ENCODE measurements at regions of chr2 and their contacts with region 1.

Region 1: DNA sequence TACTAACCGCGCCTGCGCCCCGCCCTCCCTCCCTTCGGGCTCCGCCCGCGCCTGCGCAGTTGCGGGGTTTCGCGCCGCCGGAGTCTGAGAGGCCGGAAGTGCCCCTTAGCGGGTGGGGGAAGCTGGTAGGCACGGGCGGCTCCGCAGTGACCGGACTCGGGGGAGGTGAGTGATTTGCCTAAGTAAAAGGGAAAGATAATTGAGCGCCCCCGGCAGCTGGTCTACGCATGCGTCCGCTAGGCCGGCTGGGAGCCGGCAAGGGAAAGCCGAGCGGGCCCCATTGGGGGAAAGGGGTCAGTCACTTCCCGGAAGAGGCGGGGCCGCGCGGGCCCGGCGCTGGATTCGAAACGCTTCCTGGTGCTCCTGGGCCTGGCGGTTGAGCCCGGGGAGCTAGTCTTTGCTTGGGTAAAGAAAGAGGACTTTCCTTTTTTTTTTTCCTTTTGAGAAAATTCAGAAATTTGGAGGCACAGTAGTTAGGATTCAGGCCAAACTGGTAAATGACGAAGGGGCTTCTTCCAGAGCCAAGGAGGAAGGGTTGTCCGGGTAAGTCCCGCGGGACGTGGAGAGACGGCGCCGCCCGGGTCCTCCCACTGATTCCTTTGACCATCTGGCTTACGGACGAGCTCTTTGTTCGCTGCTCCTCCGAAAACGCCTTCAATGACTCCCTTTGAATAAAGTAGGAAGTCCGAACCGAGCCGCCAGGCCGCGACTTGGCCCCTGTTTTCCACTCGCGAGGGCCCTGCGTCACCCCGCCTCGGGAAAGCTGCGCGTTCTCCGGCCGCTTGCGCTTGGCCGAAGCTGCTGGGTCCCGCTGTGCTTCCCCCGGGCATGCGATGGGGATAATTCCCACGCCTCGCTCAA is at the starts of genes GEN1 and SMC6:
- DNase-seq: peak; percentile 91 to 96 (median 95)
- ATAC-seq: peak; percentile 97 to 98
- H3K4me3 ChIP-seq: peak within 1 kb of the TSS; percentile 51
- H3K27ac ChIP-seq: peak within 1 kb of the TSS; percentile 99
- H3K4me1 ChIP-seq: peaks cover 3% of the 10 kb centered on the region
- H3K27me3 ChIP-seq: no peaks in the 10 kb centered on the region
- total RNA-seq, gene GEN1: 3.5 to 5.5 (median 4.3) TPM
- total RNA-seq, gene SMC6: 11.9 to 14.6 (median 13.1) TPM

Region 2: DNA sequence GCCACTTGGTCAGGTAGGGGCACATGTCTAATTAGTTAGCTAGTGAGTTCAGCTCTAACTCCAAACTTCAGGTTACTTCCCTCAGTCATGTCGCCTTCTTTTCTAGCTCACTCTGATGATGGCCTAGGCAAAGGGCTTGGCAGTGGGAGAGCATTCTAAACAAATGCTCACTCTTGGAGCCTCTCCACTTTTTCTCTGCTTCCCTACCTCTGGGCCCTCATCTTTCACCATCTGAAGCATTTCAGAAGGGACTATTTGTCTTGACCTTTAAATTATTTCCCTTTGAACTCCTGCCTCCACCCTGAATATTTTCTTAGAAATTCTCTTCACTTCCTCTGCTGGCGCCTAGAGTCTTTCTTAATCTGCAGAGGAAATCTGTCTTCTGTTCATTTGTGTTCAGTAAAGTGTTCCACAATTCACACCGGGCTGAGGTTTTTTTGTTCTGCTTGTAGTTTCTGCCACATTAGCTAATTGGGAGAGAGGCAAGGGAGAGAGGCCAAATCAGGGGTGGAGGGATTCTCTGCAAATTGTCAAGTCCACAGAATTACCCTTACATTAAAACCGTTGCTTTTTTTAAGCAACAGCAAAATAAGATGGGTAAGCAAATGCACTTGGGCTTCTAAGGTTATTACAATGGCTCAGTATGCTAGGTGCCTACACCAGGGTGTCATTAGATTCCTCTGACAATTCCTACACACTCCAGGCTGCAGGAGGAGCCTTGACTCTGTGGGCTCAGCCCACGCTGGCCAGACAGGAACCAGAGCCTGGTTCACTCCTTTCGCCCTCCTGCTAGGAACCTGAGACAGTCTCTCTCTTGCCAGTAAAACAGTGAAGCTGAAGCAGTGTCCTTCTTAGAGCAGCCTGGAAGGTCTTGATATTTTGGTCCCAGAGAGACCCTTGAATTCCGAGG is 67.8 kb after region 1 on chr2:
- intact Hi-C with region 1: loop called in 2 of 4 experiments (anchors 10 kb)
- DNase-seq: peak in 1 of 3 donors; percentile 46
- ATAC-seq: peak; percentile 52 to 64
- H3K4me3 ChIP-seq: no peak overlapping the region
- H3K27ac ChIP-seq: peak overlapping the region; percentile 93
- H3K4me1 ChIP-seq: peaks cover 3% of the 10 kb centered on the region
- H3K27me3 ChIP-seq: no peaks in the 10 kb centered on the region

Region 3: GRCh38 chr2:18467749-18468360 is 713.8 kb after region 1 on chr2:
- intact Hi-C with region 1: no loop called
- DNase-seq: peak; percentile 57 to 82 (median 65)
- ATAC-seq: peak; percentile 75 to 86
- H3K4me3 ChIP-seq: no peak overlapping the region
- H3K27ac ChIP-seq: no peak overlapping the region
- H3K4me1 ChIP-seq: peaks cover 2% of the 10 kb centered on the region
- H3K27me3 ChIP-seq: no peaks in the 10 kb centered on the region